HepG2 (cell line): ENCODE measurements at regions of chr7 and their contacts with region 1.

Region 1: DNA sequence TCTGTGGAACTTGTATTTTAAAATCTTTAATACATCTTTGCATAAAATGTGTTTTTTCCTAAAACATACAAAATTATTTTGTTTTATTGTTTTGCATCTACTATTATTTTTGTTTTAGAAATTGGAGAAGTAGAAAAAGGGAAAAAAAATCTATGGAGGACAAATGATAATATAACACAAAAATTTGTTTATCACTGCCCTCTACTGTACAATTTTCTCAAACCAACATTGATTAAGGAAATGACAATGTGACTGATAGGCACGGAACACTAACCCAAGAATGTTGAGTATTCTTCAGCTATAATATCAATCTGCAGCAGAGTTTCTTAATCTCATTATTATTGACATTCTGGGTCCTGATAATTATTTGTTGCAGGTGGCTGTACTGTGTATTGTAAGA is 9.5 kb upstream of the ING3 start:
- DNase-seq: no peak
- ATAC-seq: 0 out of 3 replicates have a peak, but pooled peaks have one; percentile 43
- H3K4me3 ChIP-seq: no peak overlapping the region
- H3K27ac ChIP-seq: no peak overlapping the region
- H3K4me1 ChIP-seq: no peaks in the 10 kb centered on the region
- H3K27me3 ChIP-seq: no peaks in the 10 kb centered on the region
- CTCF ChIP-seq: peak; percentile 27; the same call in 1 of the 2 replicates
- EP300 ChIP-seq: no peak
- POLR2A ChIP-seq: no peak
- RAD21 ChIP-seq: no peak

Region 2: GRCh38 chr7:120838281-120838682 is 102.8 kb before region 1 on chr7:
- CTCF ChIA-PET with region 1: no interaction called
- POLR2A ChIA-PET with region 1: no interaction called
- in situ Hi-C with region 1: no loop called
- intact Hi-C with region 1: no loop called
- DNase-seq: no peak
- ATAC-seq: no peak
- H3K4me3 ChIP-seq: no peak overlapping the region
- H3K27ac ChIP-seq: no peak overlapping the region
- H3K4me1 ChIP-seq: peaks cover 8% of the 10 kb centered on the region; the same call in 1 of the 2 replicates
- H3K27me3 ChIP-seq: no peaks in the 10 kb centered on the region
- CTCF ChIP-seq: no peak
- EP300 ChIP-seq: no peak
- POLR2A ChIP-seq: no peak
- RAD21 ChIP-seq: no peak

Region 3: GRCh38 chr7:120857588-120858573 is 83.2 kb before region 1 on chr7 and contains the start of gene TSPAN12:
- CTCF ChIA-PET with region 1: no interaction called
- POLR2A ChIA-PET with region 1: no interaction called
- in situ Hi-C with region 1: no loop called
- intact Hi-C with region 1: loop called (anchors 1 kb)
- DNase-seq: peak; percentile 39
- ATAC-seq: peak; percentile 98
- H3K4me3 ChIP-seq: peak within 1 kb of the TSS; percentile 61 to 75 (median 70)
- H3K27ac ChIP-seq: no peak within 1 kb of the TSS
- H3K4me1 ChIP-seq: peaks cover 6% of the 10 kb centered on the region
- H3K27me3 ChIP-seq: no peaks in the 10 kb centered on the region; a peak in 1 of 5 replicates
- CTCF ChIP-seq: peak; percentile 62
- EP300 ChIP-seq: no peak
- POLR2A ChIP-seq: no peak
- RAD21 ChIP-seq: peak; percentile 55
- total RNA-seq, gene TSPAN12: 0.70 and 0.95 TPM in 2 replicates